IMR-90 (cell line): ENCODE measurements at regions of chr15 and their contacts with region 1.

Region 1: DNA sequence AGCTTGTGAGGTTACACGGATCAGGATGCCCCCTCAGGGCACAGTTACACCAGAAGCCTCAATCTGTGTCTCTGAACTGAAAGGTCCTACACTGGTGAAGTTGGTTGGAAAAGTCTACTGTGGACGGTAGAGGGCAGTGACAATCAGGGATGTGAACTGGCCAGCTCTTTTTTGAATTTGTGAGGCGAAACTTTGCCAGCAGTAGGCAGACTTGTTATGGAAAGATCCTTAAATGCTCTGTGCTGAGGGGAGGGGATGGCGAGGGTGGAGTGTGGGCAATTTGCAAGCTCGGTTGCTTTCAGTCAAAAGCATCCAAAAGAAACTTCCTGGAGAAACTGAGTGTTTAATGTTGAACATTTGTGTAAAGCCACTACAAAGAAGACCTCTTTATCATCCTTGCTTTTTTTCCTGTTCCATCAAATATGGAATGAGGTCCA is 127.4 kb upstream of the ABHD17C start:
- DNase-seq: peak; percentile 89
- ATAC-seq: peak; percentile 95
- H3K4me3 ChIP-seq: no peak overlapping the region
- H3K27ac ChIP-seq: peak overlapping the region; percentile 49
- H3K4me1 ChIP-seq: peaks cover 16% of the 10 kb centered on the region
- H3K27me3 ChIP-seq: no peaks in the 10 kb centered on the region
- CTCF ChIP-seq: peak; percentile 97
- POLR2A ChIP-seq: peak; percentile 56
- RAD21 ChIP-seq: peak; percentile 97

Region 2: GRCh38 chr15:80489030-80489594 is 78.6 kb before region 1 on chr15:
- CTCF ChIA-PET with region 1: interaction called, 13 read pairs
- POLR2A ChIA-PET with region 1: no interaction called
- dilution Hi-C with region 1: no loop called
- in situ Hi-C with region 1: no loop called
- intact Hi-C with region 1: no loop called
- DNase-seq: peak; percentile 93
- ATAC-seq: peak; percentile 55
- H3K4me3 ChIP-seq: no peak overlapping the region
- H3K27ac ChIP-seq: peak overlapping the region; percentile 99
- H3K4me1 ChIP-seq: peaks cover 50% of the 10 kb centered on the region
- H3K27me3 ChIP-seq: no peaks in the 10 kb centered on the region
- CTCF ChIP-seq: no peak
- POLR2A ChIP-seq: no peak
- RAD21 ChIP-seq: no peak

Region 3: DNA sequence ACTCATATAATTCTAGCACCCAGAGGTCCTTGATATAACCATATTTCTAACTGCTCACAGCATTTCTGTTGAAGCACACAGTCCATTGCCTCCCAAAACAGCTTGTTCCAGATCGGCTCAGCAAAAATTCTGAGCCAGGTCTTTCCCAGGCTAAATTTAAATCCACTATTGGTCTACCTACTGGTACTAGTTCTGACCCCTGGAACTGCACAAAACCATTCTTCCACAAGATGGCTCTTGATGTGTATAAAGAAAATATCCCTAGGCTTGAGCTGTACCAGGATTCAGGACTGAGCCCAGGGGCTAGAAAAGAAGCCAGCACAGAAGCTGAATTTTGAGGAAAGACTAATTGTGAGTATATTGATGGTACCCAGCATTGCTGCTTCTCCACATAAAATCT is 51.9 kb after region 1 on chr15:
- CTCF ChIA-PET with region 1: interaction called, 11 read pairs
- POLR2A ChIA-PET with region 1: no interaction called
- dilution Hi-C with region 1: no loop called
- in situ Hi-C with region 1: no loop called
- intact Hi-C with region 1: no loop called
- DNase-seq: peak; percentile 43
- ATAC-seq: peak; percentile 54
- H3K4me3 ChIP-seq: no peak overlapping the region
- H3K27ac ChIP-seq: peak overlapping the region; percentile 47; the same call in 1 of the 2 replicates
- H3K4me1 ChIP-seq: peaks cover 32% of the 10 kb centered on the region
- H3K27me3 ChIP-seq: no peaks in the 10 kb centered on the region
- CTCF ChIP-seq: peak; percentile 33; the same call in 1 of the 2 replicates
- POLR2A ChIP-seq: no peak
- RAD21 ChIP-seq: peak; percentile 38

Region 4: GRCh38 chr15:80695104-80695910 is 127.6 kb after region 1 on chr15 and contains the start of gene ABHD17C:
- CTCF ChIA-PET with region 1: interaction called, 12 read pairs
- POLR2A ChIA-PET with region 1: interaction called, 3 read pairs
- dilution Hi-C with region 1: no loop called
- in situ Hi-C with region 1: no loop called
- intact Hi-C with region 1: loop called (anchors 2 kb)
- DNase-seq: peak; percentile 53
- ATAC-seq: peak; percentile 84
- H3K4me3 ChIP-seq: peak within 1 kb of the TSS; percentile 100
- H3K27ac ChIP-seq: peak within 1 kb of the TSS; percentile 92
- H3K4me1 ChIP-seq: peaks cover 14% of the 10 kb centered on the region
- H3K27me3 ChIP-seq: no peaks in the 10 kb centered on the region
- CTCF ChIP-seq: no peak
- POLR2A ChIP-seq: no peak
- RAD21 ChIP-seq: no peak; the same call in 1 of the 2 replicates
- total RNA-seq, gene ABHD17C: 5.3 and 5.4 TPM in 2 replicates

Region 5: DNA sequence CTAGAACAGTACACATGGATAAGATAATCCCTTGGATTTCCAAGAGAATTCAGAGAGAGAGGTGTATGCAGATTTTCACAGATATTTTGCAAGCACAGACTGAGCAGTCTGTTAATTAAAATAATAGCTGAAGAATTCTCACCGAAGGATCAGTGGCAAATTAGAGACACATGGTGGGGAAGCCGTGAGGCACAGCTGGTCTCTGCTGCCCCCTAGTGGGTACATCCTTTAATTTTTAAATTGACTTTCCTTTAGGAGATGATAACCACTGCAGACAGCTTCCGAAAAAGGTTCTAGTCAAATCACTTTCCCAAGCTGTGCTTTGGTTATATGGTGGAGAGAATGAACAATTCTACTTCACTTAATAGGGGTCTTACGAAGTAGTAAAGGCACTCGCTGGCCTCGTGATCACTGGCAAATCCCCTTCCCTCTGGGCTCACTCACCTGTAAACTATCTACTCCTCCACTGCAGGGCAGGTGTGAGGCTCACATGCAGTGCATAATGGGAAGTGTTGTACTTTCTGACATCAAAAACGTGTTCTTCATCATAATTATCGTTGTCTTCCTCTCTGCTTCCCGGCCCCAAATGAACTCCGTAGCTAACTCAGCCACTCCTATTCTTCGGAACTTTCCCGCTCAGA is 402.4 kb after region 1 on chr15:
- CTCF ChIA-PET with region 1: interaction called, 5 read pairs
- POLR2A ChIA-PET with region 1: no interaction called
- dilution Hi-C with region 1: no loop called
- in situ Hi-C with region 1: loop called (anchors 5 kb)
- intact Hi-C with region 1: loop called (anchors 5 kb)
- DNase-seq: peak; percentile 54
- ATAC-seq: peak; percentile 68
- H3K4me3 ChIP-seq: no peak overlapping the region
- H3K27ac ChIP-seq: no peak overlapping the region
- H3K4me1 ChIP-seq: peaks cover 13% of the 10 kb centered on the region
- H3K27me3 ChIP-seq: no peaks in the 10 kb centered on the region
- CTCF ChIP-seq: peak; percentile 86
- POLR2A ChIP-seq: 0 out of 2 replicates have a peak, but pooled peaks have one; percentile 40
- RAD21 ChIP-seq: peak; percentile 96